Calu3 (cell line): ENCODE measurements at regions of chr5 and their contacts with region 1.

Region 1: GRCh38 chr5:150458819-150459557 is 9.4 kb upstream of the RPS14 start:
- DNase-seq: peak; percentile 93
- H3K4me3 Mint-ChIP-seq: no peak overlapping the region
- H3K27ac Mint-ChIP-seq: no peak overlapping the region
- H3K4me1 Mint-ChIP-seq: peaks cover 7% of the 10 kb centered on the region
- H3K27me3 Mint-ChIP-seq: no peaks in the 10 kb centered on the region
- CTCF ChIP-seq: peak; percentile 94

Region 2: DNA sequence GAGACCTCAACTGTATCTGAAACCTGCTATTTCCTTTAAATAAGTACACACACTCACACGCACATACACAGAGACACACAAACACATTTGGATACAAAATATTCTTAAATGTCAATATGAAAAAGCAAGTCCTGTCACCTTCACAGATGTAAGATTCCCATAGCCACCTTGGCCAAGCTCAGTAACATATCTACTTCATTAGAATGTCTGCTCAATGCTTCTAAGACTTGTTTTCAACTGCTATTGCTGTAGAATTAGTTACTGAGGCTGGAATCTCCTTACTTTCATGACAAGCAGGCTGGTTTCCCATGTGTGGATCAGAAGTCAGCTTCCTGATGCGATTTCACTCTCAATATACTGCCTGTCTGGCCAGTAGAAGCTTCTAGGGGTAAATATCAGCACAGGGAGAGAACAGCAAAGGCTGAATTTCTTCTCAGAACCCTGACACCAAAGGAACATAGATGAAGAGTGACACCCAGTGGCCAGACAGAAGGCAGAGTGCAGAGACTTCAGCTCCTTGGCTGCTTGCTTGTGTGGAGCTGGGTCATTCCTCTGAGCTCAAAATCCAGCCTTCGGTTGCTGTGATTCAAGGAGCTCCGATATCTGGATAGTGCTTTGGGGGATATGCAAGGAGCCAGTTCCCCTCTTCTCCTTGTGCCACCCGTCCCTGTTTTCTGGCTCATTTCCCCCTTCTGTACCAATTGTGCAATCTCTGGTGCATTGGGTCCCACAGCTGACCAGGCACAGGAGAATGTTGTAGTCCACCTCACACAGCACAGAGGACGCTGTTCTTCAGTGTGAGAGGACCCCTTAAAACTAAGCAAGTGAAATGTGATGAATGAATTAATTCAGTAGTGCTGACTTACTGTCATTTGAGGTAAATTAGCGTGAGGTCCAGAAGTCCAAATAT is 1344.3 kb before region 1 on chr5:
- CTCF ChIA-PET with region 1: no interaction called
- intact Hi-C with region 1: no loop called
- DNase-seq: peak; percentile 87
- H3K4me3 Mint-ChIP-seq: no peak overlapping the region
- H3K27ac Mint-ChIP-seq: peak overlapping the region; percentile 64
- H3K4me1 Mint-ChIP-seq: peaks cover 77% of the 10 kb centered on the region
- H3K27me3 Mint-ChIP-seq: no peaks in the 10 kb centered on the region
- CTCF ChIP-seq: peak; percentile 81

Region 3: GRCh38 chr5:150523472-150524350 is 64.7 kb after region 1 on chr5:
- CTCF ChIA-PET with region 1: interaction called, 10 read pairs
- intact Hi-C with region 1: loop called (anchors 1 kb)
- DNase-seq: peak; percentile 52
- H3K4me3 Mint-ChIP-seq: no peak overlapping the region
- H3K27ac Mint-ChIP-seq: no peak overlapping the region
- H3K4me1 Mint-ChIP-seq: peaks cover 25% of the 10 kb centered on the region
- H3K27me3 Mint-ChIP-seq: no peaks in the 10 kb centered on the region
- CTCF ChIP-seq: peak; percentile 63

Region 4: DNA sequence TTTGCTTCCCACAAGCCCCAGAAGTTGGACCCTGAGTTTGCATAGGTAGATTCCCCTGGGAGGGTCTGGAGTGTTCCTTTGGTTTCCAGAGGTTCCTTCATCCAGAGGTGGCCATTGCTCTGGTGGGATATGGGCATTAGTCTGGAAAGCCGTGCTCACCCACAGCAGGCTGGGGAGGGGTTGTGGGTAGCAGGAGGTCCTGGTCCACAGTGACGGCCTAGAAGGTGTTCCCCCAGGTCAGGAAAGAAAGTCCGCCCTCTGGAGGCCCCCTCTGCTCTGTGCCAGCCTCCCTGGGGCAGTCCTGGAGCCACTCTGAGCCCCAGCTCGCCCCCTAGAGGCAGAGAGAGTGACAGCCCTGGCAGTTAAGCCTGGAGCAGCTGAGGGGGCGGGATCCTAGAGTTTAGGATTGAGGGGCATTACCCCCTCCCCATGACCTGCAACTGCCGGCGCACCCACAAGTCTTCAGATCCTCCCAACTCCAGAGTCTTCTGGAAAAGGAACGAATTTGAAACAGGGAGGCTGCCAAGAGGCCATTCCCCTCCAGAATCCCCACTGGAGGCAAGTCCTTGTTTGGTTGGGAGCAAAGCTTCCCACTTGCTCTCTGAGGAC is 85.7 kb after region 1 on chr5:
- CTCF ChIA-PET with region 1: interaction called, 13 read pairs
- intact Hi-C with region 1: loop called (anchors 1 kb)
- DNase-seq: peak; percentile 93
- H3K4me3 Mint-ChIP-seq: no peak overlapping the region
- H3K27ac Mint-ChIP-seq: no peak overlapping the region
- H3K4me1 Mint-ChIP-seq: no peaks in the 10 kb centered on the region
- H3K27me3 Mint-ChIP-seq: no peaks in the 10 kb centered on the region
- CTCF ChIP-seq: peak; percentile 93